HepG2 (cell line): ENCODE measurements at regions of chr19 and their contacts with region 1.

Region 1: DNA sequence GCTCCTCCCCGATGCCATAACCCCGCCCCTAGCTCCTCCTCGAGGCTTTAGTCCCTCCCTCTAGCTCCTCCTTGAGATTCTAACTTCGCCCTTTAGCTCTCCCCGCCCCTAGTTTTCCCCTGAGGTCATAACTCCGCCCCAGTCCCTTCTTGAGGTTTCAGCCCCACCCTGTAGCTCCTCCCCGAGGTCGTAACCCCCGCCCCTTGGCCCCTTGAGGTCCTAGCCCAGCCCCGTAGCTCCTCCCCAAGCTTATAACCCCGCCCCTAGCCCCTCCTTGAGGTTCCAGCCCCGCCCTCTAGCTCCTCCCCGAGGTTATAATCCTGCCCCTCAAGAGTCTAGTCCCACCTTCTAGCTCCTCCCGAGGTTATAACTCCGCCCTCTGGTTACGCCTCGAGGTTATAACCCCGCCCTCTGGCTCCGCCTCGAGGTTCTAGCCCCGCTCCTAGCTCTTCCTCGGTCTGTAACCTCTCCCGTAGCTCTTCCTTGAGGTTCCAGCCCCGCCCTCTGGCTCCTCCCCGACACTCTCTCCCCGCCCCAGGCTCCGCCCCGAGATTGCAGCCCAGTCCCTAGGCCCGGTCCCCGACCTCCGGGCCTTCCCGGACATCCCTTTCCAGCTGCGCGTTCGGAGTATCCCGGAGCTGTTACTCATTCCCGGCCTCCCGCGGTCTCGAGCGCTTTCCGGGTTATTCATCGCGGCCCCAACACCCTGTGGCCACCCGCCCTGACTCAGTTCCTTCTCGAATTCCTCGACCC is 1.4 kb downstream of the PLAUR start:
- DNase-seq: peak; percentile 96
- ATAC-seq: peak; percentile 97
- H3K4me3 ChIP-seq: peak overlapping the region; percentile 58 to 74 (median 63)
- H3K27ac ChIP-seq: no peak overlapping the region
- H3K4me1 ChIP-seq: peaks cover 26% of the 10 kb centered on the region
- H3K27me3 ChIP-seq: peaks cover 0 to 12% of the 10 kb centered on the region in 2 experiments; a peak in 2 of 5 replicates
- CTCF ChIP-seq: no peak
- EP300 ChIP-seq: no peak
- POLR2A ChIP-seq: peak; percentile 47 to 64; a peak in 3 of 4 replicates
- RAD21 ChIP-seq: no peak

Region 2: GRCh38 chr19:43634872-43635560 is 33.6 kb before region 1 on chr19:
- CTCF ChIA-PET with region 1: no interaction called
- POLR2A ChIA-PET with region 1: interaction called, 10 read pairs
- in situ Hi-C with region 1: no loop called
- intact Hi-C with region 1: no loop called
- DNase-seq: peak; percentile 69
- ATAC-seq: peak; percentile 74
- H3K4me3 ChIP-seq: peak overlapping the region; percentile 61 to 76 (median 67)
- H3K27ac ChIP-seq: peak overlapping the region; percentile 90
- H3K4me1 ChIP-seq: peaks cover 59% of the 10 kb centered on the region
- H3K27me3 ChIP-seq: no peaks in the 10 kb centered on the region
- CTCF ChIP-seq: no peak
- EP300 ChIP-seq: peak in 1 of 2 experiments; percentile 42; a peak in 1 of 4 replicates
- POLR2A ChIP-seq: peak; percentile 74 to 75
- RAD21 ChIP-seq: 0 out of 2 replicates have a peak, but pooled peaks have one; percentile 15

Region 3: GRCh38 chr19:43743022-43743421 is 74.4 kb after region 1 on chr19:
- CTCF ChIA-PET with region 1: no interaction called
- POLR2A ChIA-PET with region 1: no interaction called
- in situ Hi-C with region 1: no loop called
- intact Hi-C with region 1: no loop called
- DNase-seq: no peak
- ATAC-seq: no peak
- H3K4me3 ChIP-seq: no peak overlapping the region
- H3K27ac ChIP-seq: no peak overlapping the region
- H3K4me1 ChIP-seq: no peaks in the 10 kb centered on the region
- H3K27me3 ChIP-seq: no peaks in the 10 kb centered on the region
- CTCF ChIP-seq: no peak
- EP300 ChIP-seq: no peak
- POLR2A ChIP-seq: no peak
- RAD21 ChIP-seq: no peak

Region 4: GRCh38 chr19:43754503-43755255 is 86.1 kb after region 1 on chr19 and contains the start of gene SMG9:
- CTCF ChIA-PET with region 1: no interaction called
- POLR2A ChIA-PET with region 1: interaction called, 13 read pairs
- in situ Hi-C with region 1: no loop called
- intact Hi-C with region 1: no loop called
- DNase-seq: peak; percentile 94
- ATAC-seq: peak; percentile 95
- H3K4me3 ChIP-seq: peak within 1 kb of the TSS; percentile 66 to 83 (median 67)
- H3K27ac ChIP-seq: peak within 1 kb of the TSS; percentile 93
- H3K4me1 ChIP-seq: peaks cover 26% of the 10 kb centered on the region
- H3K27me3 ChIP-seq: no peaks in the 10 kb centered on the region
- CTCF ChIP-seq: no peak
- EP300 ChIP-seq: no peak
- POLR2A ChIP-seq: peak; percentile 90 to 94
- RAD21 ChIP-seq: no peak
- total RNA-seq, gene SMG9: 9.6 and 18.7 TPM in 2 replicates

Region 5: GRCh38 chr19:43765109-43765876 is 96.7 kb after region 1 on chr19:
- CTCF ChIA-PET with region 1: no interaction called
- POLR2A ChIA-PET with region 1: no interaction called
- in situ Hi-C with region 1: no loop called
- intact Hi-C with region 1: loop called (anchors 10 kb)
- DNase-seq: peak; percentile 30
- ATAC-seq: peak; percentile 50; the same call in 1 of the 3 replicates
- H3K4me3 ChIP-seq: no peak overlapping the region
- H3K27ac ChIP-seq: no peak overlapping the region
- H3K4me1 ChIP-seq: peaks cover 16% of the 10 kb centered on the region; the same call in 1 of the 2 replicates
- H3K27me3 ChIP-seq: no peaks in the 10 kb centered on the region
- CTCF ChIP-seq: no peak
- EP300 ChIP-seq: no peak
- POLR2A ChIP-seq: no peak
- RAD21 ChIP-seq: no peak